Activated T-helper 1 cell treated with anti-CD3 and anti-CD28 coated beads, Interleukin-12 subunit alpha, Interleukin-12 subunit beta, Interleukin-2, Interleukin-4 antibody, amounts not matched to agents 30 ng/mL and 10 ng/mL and 1 ng/mL, durations not matched to agents 14 hours and 24 hours and 36 hours (primary cell): ENCODE measurements at regions of chr4 and their contacts with region 1.

Region 1: DNA sequence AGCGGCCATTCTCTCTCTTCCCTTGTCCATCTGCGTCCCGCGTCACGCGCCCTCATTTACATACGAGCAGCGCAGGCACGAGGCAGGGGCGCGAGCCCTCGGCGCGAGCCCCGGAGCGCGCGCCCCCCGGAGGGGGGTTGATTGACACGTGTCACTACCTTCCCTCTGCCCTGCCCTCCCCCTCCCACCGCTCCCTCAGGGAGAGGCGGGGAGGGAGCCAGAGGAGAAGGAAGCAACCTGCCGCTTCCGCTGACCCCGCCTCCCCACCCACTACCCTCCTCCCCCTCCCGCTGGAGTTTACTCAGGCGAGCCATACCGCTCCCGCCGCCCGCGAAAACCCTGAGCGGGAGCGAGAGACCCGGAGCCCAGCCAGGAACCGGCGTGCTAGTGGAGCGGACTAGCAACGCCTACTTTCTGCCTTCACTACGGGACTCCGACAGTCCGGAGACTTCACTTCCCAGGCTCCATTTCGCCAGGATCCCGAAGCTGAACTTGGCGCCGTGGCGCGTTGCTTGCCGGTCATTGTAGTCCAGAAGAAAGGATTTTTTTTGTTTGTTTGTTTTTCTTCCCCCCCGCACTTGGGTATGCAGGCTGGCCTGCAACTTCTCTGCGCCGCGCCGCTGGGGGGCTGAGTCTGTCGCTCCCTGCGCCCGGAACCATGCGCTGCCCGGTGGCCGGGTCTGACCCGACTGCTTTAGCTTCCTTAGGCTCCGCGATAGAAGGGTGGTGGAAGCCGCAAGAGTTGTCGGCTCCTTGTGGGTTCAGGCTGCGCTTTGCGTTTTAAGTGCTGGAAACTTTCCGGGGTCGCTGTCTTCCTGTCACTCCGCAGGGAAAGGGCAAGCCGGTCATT is at the start of gene LCORL:
- DNase-seq: peak; percentile 83
- H3K4me3 Mint-ChIP-seq: peak within 1 kb of the TSS; percentile 98
- H3K27ac Mint-ChIP-seq: peak within 1 kb of the TSS; percentile 93
- H3K4me1 Mint-ChIP-seq: peaks cover 26% of the 10 kb centered on the region
- H3K27me3 Mint-ChIP-seq: peaks cover 65% of the 10 kb centered on the region
- total RNA-seq, gene LCORL: 8.7 TPM in 2 replicates

Region 2: DNA sequence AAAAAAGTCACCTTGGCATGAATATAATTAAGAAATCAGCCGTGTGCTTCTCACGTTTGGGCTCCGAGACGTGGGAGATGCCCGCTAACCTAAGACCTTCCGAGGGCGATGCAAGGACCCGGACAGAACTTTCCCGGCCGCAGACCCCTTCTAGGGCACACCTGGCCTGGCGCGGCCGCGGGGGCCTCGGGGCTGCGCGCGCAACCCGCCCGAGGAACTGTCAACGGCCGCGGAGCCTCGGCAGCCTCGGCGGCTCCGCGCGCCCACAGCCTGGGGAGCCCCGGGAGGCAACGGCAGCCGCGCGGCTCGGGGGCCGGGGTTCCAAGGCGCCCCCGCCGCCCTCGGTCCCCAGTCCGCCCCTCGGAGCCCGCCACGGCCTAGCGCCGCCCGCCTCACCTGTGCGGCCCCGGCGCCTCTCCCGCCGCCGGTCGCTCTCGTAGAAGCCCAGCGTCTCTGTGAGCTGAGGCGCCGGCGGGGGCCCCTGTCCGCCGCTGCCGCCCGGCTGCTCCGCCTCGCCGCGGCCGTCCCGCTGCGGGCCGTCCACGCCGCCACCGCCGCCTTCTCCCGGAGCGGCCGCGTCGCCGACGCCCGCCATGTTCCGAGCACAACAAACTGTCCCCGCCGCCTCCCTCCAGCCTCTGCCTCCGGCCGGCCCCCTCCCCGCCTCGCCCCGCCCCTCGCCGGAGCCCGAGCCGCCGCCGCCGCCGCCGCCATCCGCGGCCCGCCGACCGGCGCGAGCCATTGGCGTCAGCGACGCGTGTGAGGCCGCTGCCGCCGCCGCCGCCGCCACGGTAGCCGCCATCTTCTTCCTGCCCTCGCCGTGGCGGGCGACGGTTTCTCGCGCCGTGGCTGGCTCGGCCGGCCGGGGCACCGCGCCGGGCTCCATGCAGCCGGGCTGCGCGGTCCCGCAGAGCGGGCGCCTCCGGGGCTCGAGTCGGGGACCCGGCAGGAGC is 1795.8 kb before region 1 on chr4 and contains the start of gene TAPT1:
- intact Hi-C with region 1: loop called (anchors 10 kb)
- DNase-seq: peak; percentile 78
- H3K4me3 Mint-ChIP-seq: peak within 1 kb of the TSS; percentile 97
- H3K27ac Mint-ChIP-seq: peak within 1 kb of the TSS; percentile 96
- H3K4me1 Mint-ChIP-seq: peaks cover 60% of the 10 kb centered on the region
- H3K27me3 Mint-ChIP-seq: no peaks in the 10 kb centered on the region
- total RNA-seq, gene TAPT1: 26.0 and 31.8 TPM in 2 replicates

Region 3: GRCh38 chr4:17511950-17512795 is 509.8 kb before region 1 on chr4 and contains the start of gene QDPR:
- intact Hi-C with region 1: loop called (anchors 1 kb)
- DNase-seq: peak; percentile 69
- H3K4me3 Mint-ChIP-seq: peak within 1 kb of the TSS; percentile 98
- H3K27ac Mint-ChIP-seq: peak within 1 kb of the TSS; percentile 92
- H3K4me1 Mint-ChIP-seq: peaks cover 15% of the 10 kb centered on the region
- H3K27me3 Mint-ChIP-seq: peaks cover 19% of the 10 kb centered on the region
- total RNA-seq, gene QDPR: 28.7 and 29.7 TPM in 2 replicates

Region 4: DNA sequence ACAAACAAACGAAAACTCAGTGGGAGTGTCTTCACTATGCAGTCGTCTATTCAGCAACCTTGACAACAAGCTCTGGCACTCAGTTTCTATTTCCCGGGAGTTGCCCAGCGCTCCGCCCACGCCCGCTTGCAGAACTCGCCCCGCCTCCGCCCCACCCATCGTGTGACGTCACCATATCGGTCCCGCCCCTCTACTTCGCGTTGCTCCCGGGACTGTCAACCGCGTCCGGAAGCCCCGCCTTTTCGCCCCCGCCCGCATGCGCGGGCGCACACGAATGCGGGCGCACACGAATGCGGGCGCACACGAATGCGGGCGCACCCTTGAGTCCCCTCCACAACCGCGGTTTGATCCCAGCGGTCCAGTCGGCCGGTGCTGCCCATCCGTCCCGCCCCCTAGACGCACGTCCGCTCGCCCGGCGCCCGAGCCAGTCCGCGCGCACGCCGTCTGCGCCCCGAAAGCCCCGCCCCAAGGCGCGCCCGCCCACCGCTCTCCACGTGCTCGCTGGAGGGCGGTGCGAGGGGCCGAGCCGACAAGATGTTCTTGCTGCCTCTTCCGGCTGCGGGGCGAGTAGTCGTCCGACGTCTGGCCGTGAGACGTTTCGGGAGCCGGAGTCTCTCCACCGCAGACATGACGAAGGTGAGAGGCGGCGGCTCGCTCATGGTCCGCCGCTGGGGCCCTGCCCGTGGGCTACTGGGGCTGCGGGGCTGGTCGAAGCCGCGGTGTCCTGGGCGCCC is 444.8 kb before region 1 on chr4 and contains the start of gene LAP3:
- intact Hi-C with region 1: loop called (anchors 1 kb)
- DNase-seq: peak; percentile 98
- H3K4me3 Mint-ChIP-seq: peak within 1 kb of the TSS; percentile 93
- H3K27ac Mint-ChIP-seq: peak within 1 kb of the TSS; percentile 94
- H3K4me1 Mint-ChIP-seq: peaks cover 38% of the 10 kb centered on the region
- H3K27me3 Mint-ChIP-seq: no peaks in the 10 kb centered on the region
- total RNA-seq, gene LAP3: 108 and 109 TPM in 2 replicates

Region 5: GRCh38 chr4:17884063-17884462 is 137.9 kb before region 1 on chr4:
- intact Hi-C with region 1: no loop called
- DNase-seq: no peak
- H3K4me3 Mint-ChIP-seq: no peak overlapping the region
- H3K27ac Mint-ChIP-seq: no peak overlapping the region
- H3K4me1 Mint-ChIP-seq: no peaks in the 10 kb centered on the region
- H3K27me3 Mint-ChIP-seq: no peaks in the 10 kb centered on the region

Region 6: GRCh38 chr4:18007625-18008024 is 14.3 kb before region 1 on chr4:
- intact Hi-C with region 1: loop called (anchors 2 kb)
- DNase-seq: no peak
- H3K4me3 Mint-ChIP-seq: no peak overlapping the region
- H3K27ac Mint-ChIP-seq: no peak overlapping the region
- H3K4me1 Mint-ChIP-seq: peaks cover 6% of the 10 kb centered on the region
- H3K27me3 Mint-ChIP-seq: peaks cover 4% of the 10 kb centered on the region

Region 7: DNA sequence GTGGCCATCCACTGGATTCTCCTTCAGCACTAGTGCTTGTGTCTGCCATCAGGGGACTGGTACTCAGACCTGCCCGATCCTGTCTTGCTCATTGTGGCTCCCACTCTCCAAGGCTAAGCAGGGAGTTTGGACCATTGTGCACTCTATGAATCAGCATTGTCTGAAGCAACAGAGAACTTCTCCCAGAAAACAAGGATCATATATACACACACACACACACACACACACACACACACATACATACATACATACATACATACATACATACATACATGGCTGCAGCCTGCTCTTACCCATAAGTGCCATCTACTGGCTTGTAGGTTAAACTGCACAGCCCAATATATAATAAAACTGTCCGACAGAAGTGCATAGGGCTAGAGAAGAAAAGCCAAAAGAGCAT is 344.9 kb after region 1 on chr4:
- intact Hi-C with region 1: loop called (anchors 10 kb)
- DNase-seq: no peak
- H3K4me3 Mint-ChIP-seq: no peak overlapping the region
- H3K27ac Mint-ChIP-seq: no peak overlapping the region
- H3K4me1 Mint-ChIP-seq: no peaks in the 10 kb centered on the region
- H3K27me3 Mint-ChIP-seq: peaks cover 6% of the 10 kb centered on the region